ENCODE measurements at regions of chr13 and their contacts with region 1.

Region 1: GRCh38 chr13:26498656-26499591 is 58.6 kb upstream of the WASF3 start:
- DNase-seq: no peak
- H3K4me3 ChIP-seq: no peak overlapping the region
- H3K27ac ChIP-seq: no peak overlapping the region
- H3K4me1 ChIP-seq: peaks cover 0 to 22% (median 9%) of the 10 kb centered on the region in 4 donors
- H3K27me3 ChIP-seq: peaks cover 0 to 3% (median 0%) of the 10 kb centered on the region in 4 donors
- CTCF ChIP-seq: no peak
- EP300 ChIP-seq: no peak
- POLR2A ChIP-seq: no peak

Region 2: DNA sequence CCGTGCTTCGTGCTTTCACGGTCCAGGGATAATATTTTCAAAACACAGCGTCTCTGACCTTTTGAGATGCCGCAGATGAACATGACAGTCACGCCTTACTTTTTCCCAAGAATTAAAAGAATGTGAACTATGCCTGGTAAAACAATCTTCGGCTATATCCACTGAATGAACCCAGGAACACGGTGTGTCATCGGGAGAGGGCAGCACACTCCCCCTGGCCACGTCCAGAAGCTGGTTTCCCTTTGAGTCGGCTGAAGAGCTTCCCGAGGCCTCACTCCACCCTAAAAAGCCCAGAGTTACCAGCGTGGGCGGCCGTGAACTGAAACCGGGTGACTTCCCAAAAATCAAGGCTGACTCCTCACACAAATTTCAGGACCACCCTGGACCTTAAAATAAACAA is 424.2 kb before region 1 on chr13:
- intact Hi-C with region 1: no loop called
- DNase-seq: peak; percentile 57
- H3K4me3 ChIP-seq: no peak overlapping the region
- H3K27ac ChIP-seq: no peak overlapping the region
- H3K4me1 ChIP-seq: no peaks in the 10 kb centered on the region
- H3K27me3 ChIP-seq: peaks cover 0 to 23% (median 0%) of the 10 kb centered on the region in 4 donors
- CTCF ChIP-seq: no peak
- EP300 ChIP-seq: no peak
- POLR2A ChIP-seq: no peak

Region 3: GRCh38 chr13:26186118-26186870 is 312.6 kb before region 1 on chr13:
- intact Hi-C with region 1: loop called (anchors 2 kb)
- DNase-seq: peak; percentile 94
- H3K4me3 ChIP-seq: peak overlapping the region; percentile 68 to 82 (median 76)
- H3K27ac ChIP-seq: peak overlapping the region; percentile 78 to 89 (median 84)
- H3K4me1 ChIP-seq: peaks cover 7 to 26% (median 18%) of the 10 kb centered on the region in 4 donors
- H3K27me3 ChIP-seq: no peaks in the 10 kb centered on the region
- CTCF ChIP-seq: peak; percentile 17 to 35 (median 28)
- EP300 ChIP-seq: no peak
- POLR2A ChIP-seq: no peak

Region 4: DNA sequence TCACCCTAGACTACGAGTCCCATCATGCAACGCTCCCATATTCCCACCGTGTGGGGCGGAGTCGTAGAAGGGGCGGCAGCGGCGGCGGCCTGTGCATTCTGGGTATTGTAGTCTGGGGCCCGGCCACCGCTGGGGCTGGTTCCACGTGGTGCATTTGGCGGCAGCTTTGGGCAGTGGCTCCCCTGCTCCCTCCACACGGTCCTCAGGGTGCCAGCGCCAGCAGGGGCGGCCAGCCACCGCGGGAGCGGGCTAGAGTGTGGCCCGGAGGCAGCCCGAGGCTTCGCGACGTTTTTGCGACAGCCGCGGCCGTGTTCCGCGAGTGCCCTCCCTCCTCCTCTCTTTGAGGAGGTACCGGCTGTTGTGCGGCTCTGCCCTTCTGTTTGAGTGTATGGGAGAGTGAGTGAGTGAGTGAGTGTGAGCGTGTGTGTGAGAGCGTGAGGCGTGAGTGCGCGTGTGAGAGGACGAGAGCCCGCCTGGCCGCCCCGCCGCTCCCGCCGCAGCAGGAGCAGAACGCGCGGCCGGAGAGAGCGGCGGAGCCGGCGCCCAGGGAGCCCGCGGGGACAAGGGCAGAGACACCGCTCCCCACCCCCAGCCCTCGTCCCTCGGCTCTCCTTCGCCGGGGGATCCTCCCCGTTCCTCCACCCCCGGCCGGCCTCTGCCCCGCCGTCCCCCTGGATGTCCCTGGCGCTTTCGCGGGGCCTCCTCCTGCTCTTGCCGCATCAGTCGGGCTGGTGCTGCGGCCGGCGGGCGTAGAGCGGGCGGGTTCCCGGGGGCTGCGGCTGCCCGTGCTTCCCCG is 244.9 kb before region 1 on chr13 and contains the start of gene CDK8:
- intact Hi-C with region 1: loop called (anchors 10 kb)
- DNase-seq: peak; percentile 95
- H3K4me3 ChIP-seq: peak within 1 kb of the TSS; percentile 88 to 98 (median 93)
- H3K27ac ChIP-seq: peak within 1 kb of the TSS; percentile 94 to 95 (median 95)
- H3K4me1 ChIP-seq: peaks cover 16 to 28% (median 28%) of the 10 kb centered on the region in 4 donors
- H3K27me3 ChIP-seq: no peaks in the 10 kb centered on the region
- CTCF ChIP-seq: no peak
- EP300 ChIP-seq: no peak
- POLR2A ChIP-seq: no peak
- total RNA-seq, gene CDK8: 20.3 to 26.3 (median 23.8) TPM

Region 5: GRCh38 chr13:26348966-26349365 is 150.0 kb before region 1 on chr13:
- intact Hi-C with region 1: no loop called
- DNase-seq: no peak
- H3K4me3 ChIP-seq: no peak overlapping the region
- H3K27ac ChIP-seq: no peak overlapping the region
- H3K4me1 ChIP-seq: no peaks in the 10 kb centered on the region
- H3K27me3 ChIP-seq: no peaks in the 10 kb centered on the region
- CTCF ChIP-seq: no peak
- EP300 ChIP-seq: no peak
- POLR2A ChIP-seq: no peak

Region 6: GRCh38 chr13:26377038-26377437 is 121.9 kb before region 1 on chr13:
- intact Hi-C with region 1: loop called (anchors 5 kb)
- DNase-seq: no peak
- H3K4me3 ChIP-seq: no peak overlapping the region
- H3K27ac ChIP-seq: no peak overlapping the region
- H3K4me1 ChIP-seq: peaks cover 0 to 13% (median 0%) of the 10 kb centered on the region in 4 donors
- H3K27me3 ChIP-seq: no peaks in the 10 kb centered on the region
- CTCF ChIP-seq: peak in 1 of 3 experiments; percentile 40
- EP300 ChIP-seq: no peak
- POLR2A ChIP-seq: no peak

Region 7: GRCh38 chr13:26549713-26550112 is 50.8 kb after region 1 on chr13:
- intact Hi-C with region 1: loop called (anchors 5 kb)
- DNase-seq: no peak
- H3K4me3 ChIP-seq: no peak overlapping the region
- H3K27ac ChIP-seq: no peak overlapping the region
- H3K4me1 ChIP-seq: no peaks in the 10 kb centered on the region
- H3K27me3 ChIP-seq: peaks cover 0 to 38% (median 0%) of the 10 kb centered on the region in 4 donors
- CTCF ChIP-seq: no peak
- EP300 ChIP-seq: no peak
- POLR2A ChIP-seq: no peak

Region 8: GRCh38 chr13:26698392-26699196 is 199.7 kb after region 1 on chr13:
- intact Hi-C with region 1: loop called (anchors 5 kb)
- DNase-seq: peak; percentile 96
- H3K4me3 ChIP-seq: peak overlapping the region; percentile 20 to 41 (median 24)
- H3K27ac ChIP-seq: no peak overlapping the region
- H3K4me1 ChIP-seq: peaks cover 3 to 10% (median 6%) of the 10 kb centered on the region in 4 donors
- H3K27me3 ChIP-seq: no peaks in the 10 kb centered on the region
- CTCF ChIP-seq: peak; percentile 93 to 97 (median 97)
- EP300 ChIP-seq: no peak
- POLR2A ChIP-seq: no peak

Measured in esophagus muscularis mucosa (tissue), 4 donors.